MCF 10A (cell line): ENCODE measurements at regions of chr10 and their contacts with region 1.

Region 1: DNA sequence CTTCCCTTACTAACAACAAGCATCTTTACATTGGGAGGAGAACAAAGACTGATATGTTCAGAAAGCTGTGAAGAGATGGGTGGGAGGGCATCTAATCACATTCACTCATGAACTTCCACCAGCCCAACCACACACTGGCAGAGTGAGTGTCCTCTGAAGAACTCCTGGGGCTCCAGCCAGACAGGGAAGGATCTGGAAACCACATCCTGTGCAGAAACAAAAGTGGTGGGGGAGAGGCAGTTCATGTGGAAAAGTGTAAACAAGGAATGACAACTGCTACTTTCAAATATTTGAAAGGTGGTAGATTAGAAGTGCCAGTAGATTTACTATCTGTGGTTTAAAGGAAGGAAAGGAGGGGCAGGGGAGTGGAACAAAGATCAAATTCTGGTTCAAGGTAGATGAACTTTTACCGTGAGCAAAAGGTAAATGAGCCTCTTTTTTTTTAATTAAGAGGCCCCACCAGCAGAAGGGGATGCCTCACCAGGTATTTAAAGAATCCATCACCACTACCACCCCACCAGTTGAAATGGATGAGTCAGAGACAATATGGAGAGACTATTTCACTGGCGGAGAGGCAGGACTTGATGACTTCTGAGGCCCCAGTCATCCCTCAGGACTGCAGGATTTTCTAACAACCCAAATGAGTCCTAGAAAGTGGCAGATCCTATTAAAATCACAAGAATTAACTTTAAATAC is 34.5 kb downstream of the GOT1 start:
- DNase-seq: peak; percentile 49
- H3K4me3 Mint-ChIP-seq: no peak overlapping the region
- H3K27ac Mint-ChIP-seq: no peak overlapping the region
- H3K4me1 Mint-ChIP-seq: peaks cover 33% of the 10 kb centered on the region
- H3K27me3 Mint-ChIP-seq: no peaks in the 10 kb centered on the region
- CTCF ChIP-seq: no peak

Region 2: DNA sequence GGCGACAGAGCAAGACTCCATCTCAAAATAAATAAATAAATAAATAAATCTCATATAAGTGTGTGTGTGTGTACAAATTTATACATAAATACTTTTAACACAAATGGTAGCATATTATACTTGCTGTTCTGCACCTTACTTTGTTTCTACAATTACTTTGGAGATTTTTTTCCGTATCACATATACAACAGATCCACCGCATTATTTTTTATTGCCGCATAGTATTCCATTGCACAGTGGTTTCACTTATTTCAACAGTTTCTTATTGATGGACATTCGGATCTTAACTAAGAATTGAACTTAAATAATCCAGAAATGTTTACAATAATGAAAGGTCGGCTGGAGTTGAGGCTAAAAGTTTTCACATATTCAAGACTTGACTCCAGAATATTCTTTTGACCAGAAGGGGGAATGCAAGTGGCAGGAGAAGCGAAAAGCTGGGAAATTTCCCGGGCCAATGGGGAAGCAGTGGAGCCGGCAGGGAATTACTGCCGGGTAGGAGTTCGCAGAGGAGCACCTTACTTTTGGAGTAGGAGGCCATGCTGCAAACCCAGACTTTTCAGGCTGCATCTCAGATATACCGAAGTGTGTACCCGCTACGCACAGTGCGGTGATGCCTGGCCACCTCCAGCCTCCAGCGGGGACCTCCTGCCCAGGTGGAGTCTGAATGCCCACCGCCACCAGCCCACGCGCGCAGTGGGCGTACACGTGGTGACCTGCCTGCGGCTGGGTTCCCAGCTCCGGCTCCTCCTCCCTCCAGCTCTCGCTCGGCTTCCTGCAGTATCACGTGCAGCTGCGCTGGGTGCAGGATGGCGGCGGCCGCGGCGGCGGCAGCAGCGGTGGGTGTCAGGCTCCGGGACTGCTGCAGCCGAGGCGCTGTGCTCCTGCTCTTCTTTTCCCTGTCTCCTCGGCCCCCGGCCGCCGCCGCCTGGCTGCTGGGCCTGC is 67.0 kb before region 1 on chr10 and contains the start of gene CNNM1:
- CTCF ChIA-PET with region 1: no interaction called
- POLR2A ChIA-PET with region 1: no interaction called
- intact Hi-C with region 1: no loop called
- DNase-seq: no peak
- H3K4me3 Mint-ChIP-seq: no peak within 1 kb of the TSS
- H3K27ac Mint-ChIP-seq: no peak within 1 kb of the TSS
- H3K4me1 Mint-ChIP-seq: no peaks in the 10 kb centered on the region
- H3K27me3 Mint-ChIP-seq: peaks cover 28% of the 10 kb centered on the region
- CTCF ChIP-seq: no peak
- total RNA-seq, gene CNNM1: 0.10 TPM in 1 of 2 replicates, not detected in the other

Region 3: GRCh38 chr10:99370993-99371392 is 24.9 kb before region 1 on chr10:
- CTCF ChIA-PET with region 1: interaction called, 12 read pairs
- POLR2A ChIA-PET with region 1: no interaction called
- intact Hi-C with region 1: no loop called
- DNase-seq: peak; percentile 43
- H3K4me3 Mint-ChIP-seq: no peak overlapping the region
- H3K27ac Mint-ChIP-seq: no peak overlapping the region
- H3K4me1 Mint-ChIP-seq: peaks cover 11% of the 10 kb centered on the region
- H3K27me3 Mint-ChIP-seq: peaks cover 42% of the 10 kb centered on the region
- CTCF ChIP-seq: peak; percentile 47